ENCODE measurements at regions of chr2 and their contacts with region 1.

Region 1: DNA sequence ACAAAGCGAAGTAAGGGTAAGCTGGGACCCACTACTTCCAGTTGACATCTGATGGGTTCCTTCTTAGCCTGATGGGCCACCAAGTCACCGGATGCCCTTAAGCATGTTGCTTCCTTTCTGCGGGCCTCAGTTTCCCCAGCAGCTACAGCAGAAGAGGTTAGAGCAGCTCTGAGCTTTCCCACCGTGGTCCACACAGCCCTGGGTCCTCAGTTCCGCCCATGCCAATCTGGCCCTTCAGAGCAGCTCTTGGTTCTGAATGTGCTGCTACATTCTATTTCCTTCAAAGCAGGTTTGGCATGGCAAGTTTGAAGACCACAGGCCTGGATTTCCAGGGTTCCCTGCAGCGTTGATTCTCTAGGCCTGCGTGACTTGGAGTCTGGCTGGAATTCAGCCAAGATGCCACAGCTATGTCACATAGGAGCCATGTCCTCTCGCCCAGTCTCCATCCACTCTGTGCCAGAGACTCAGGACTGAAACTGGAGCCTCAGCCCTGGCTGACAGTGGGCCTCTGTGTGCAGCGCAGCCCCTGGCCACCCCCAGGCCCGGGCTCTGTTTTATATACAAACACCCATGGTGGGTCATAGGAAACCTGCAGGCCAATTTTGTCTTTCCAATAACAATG is 79.6 kb downstream of the TFCP2L1 start:
- DNase-seq: peak; percentile 85 to 91
- H3K4me3 ChIP-seq: no peak overlapping the region
- H3K27ac ChIP-seq: no peak overlapping the region
- H3K4me1 ChIP-seq: peaks cover 17% of the 10 kb centered on the region
- H3K27me3 ChIP-seq: no peaks in the 10 kb centered on the region
- CTCF ChIP-seq: no peak

Region 2: DNA sequence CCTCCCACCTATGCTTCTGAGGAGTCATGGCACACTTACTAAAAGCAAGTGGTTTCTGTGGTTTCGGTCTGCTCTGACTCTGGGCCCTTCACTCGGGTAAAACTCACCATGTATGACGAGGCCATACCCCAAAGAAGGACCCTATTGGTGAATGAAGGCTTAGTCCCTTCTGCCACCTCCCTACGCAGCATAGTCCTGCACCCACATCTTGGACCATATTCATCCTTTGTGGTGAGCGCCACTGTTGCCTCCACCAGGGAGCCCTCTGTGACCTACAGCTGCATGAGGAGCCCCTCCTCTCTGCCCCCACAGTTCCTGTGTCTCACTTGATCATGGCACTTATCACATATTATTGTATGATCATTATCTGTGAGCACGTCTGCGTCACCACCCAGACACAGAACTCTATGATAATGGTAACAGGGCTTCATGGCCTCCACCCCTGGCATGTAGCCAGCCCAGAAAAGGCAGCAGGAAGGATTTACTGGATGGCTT is 33.8 kb before region 1 on chr2:
- CTCF ChIA-PET with region 1: no interaction called
- POLR2A ChIA-PET with region 1: interaction called, 11 read pairs
- intact Hi-C with region 1: no loop called
- DNase-seq: no peak
- H3K4me3 ChIP-seq: no peak overlapping the region
- H3K27ac ChIP-seq: no peak overlapping the region
- H3K4me1 ChIP-seq: peaks cover 9% of the 10 kb centered on the region
- H3K27me3 ChIP-seq: no peaks in the 10 kb centered on the region
- CTCF ChIP-seq: no peak

Region 3: GRCh38 chr2:121284463-121285449 is 79.3 kb after region 1 on chr2 and contains the start of gene TFCP2L1:
- CTCF ChIA-PET with region 1: no interaction called
- POLR2A ChIA-PET with region 1: no interaction called
- intact Hi-C with region 1: loop called (anchors 10 kb)
- DNase-seq: peak in 1 of 2 experiments; percentile 76
- H3K4me3 ChIP-seq: peak within 1 kb of the TSS; percentile 83
- H3K27ac ChIP-seq: no peak within 1 kb of the TSS
- H3K4me1 ChIP-seq: peaks cover 14% of the 10 kb centered on the region; the same call in 1 of the 2 replicates
- H3K27me3 ChIP-seq: no peaks in the 10 kb centered on the region
- CTCF ChIP-seq: no peak
- total RNA-seq, gene TFCP2L1: 4.6 and 7.0 TPM in 2 replicates